ENCODE measurements at regions of chr10 and their contacts with region 1.

Region 1: DNA sequence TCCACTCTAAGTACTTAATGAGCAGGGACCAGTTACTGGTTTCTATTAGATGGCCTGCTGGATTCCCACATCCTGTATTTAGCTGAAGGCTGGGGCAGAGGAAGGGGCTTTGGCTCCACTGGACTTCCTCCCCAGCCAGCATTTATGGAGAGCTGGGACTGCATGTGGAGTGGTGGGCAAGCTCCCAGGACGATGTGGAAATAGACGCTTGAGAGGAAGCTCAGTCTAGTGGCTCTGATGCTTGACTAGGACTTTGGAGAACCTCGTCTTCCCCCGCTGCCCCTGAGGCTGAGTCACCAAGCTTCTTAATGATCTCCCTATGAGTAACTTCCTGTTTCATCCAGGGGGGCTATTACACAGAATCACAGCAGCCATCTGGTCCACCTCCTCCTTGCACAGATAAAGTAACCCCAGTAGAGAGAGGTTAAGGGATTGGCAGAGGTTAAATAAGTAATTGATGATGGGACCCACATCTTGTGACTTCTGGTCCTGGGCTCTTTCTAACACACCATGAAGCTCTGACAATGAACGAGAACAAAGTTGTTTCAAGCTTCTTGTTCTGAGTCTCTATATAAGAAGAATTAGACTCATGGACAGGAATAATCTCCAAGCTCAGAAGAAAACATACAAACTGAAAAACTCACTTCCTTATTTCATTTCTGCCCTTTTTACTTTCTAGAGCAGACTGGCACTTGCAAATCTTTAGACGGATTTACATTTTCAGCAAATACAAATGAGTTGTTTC is 126.2 kb downstream of the PRPF18 start:
- DNase-seq: peak; percentile 96
- H3K4me3 ChIP-seq: no peak overlapping the region
- H3K27ac ChIP-seq: peak overlapping the region; percentile 92
- H3K4me1 ChIP-seq: peaks cover 43% of the 10 kb centered on the region
- H3K27me3 ChIP-seq: no peaks in the 10 kb centered on the region
- CTCF ChIP-seq: no peak
- POLR2A ChIP-seq: peak; percentile 65

Region 2: GRCh38 chr10:13542533-13542932 is 170.5 kb before region 1 on chr10:
- CTCF ChIA-PET with region 1: no interaction called
- POLR2A ChIA-PET with region 1: no interaction called
- dilution Hi-C with region 1: no loop called
- intact Hi-C with region 1: no loop called
- DNase-seq: no peak
- H3K4me3 ChIP-seq: no peak overlapping the region
- H3K27ac ChIP-seq: no peak overlapping the region
- H3K4me1 ChIP-seq: no peaks in the 10 kb centered on the region
- H3K27me3 ChIP-seq: peaks cover 14 to 30% of the 10 kb centered on the region in 2 experiments
- CTCF ChIP-seq: no peak
- POLR2A ChIP-seq: no peak

Region 3: GRCh38 chr10:13758312-13758711 is 45.3 kb after region 1 on chr10:
- CTCF ChIA-PET with region 1: no interaction called
- POLR2A ChIA-PET with region 1: interaction called, 3 read pairs
- dilution Hi-C with region 1: no loop called
- intact Hi-C with region 1: loop called (anchors 2 kb)
- DNase-seq: peak; percentile 77
- H3K4me3 ChIP-seq: no peak overlapping the region
- H3K27ac ChIP-seq: peak overlapping the region; percentile 85
- H3K4me1 ChIP-seq: peaks cover 36% of the 10 kb centered on the region
- H3K27me3 ChIP-seq: no peaks in the 10 kb centered on the region
- CTCF ChIP-seq: no peak
- POLR2A ChIP-seq: no peak

Region 4: DNA sequence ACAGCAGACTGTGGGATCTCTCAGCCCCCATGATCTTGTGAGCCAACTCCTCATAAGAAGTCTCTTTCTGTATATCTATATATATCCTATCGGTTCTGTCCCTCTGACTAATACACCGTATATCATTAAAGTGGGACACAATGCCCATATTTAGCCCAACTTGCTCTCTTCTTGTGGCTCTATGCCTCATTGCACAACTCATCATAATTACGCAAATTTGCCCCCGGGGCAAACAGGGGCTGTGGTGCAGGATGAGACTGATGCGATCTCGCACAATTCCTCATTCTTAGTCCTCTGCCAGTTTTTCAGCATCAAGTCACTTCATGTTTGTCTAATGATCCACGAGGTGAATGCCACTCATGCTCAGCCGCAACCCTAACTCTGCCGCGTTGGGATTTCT is 56.9 kb after region 1 on chr10:
- CTCF ChIA-PET with region 1: no interaction called
- POLR2A ChIA-PET with region 1: no interaction called
- dilution Hi-C with region 1: no loop called
- intact Hi-C with region 1: no loop called
- DNase-seq: no peak
- H3K4me3 ChIP-seq: no peak overlapping the region
- H3K27ac ChIP-seq: no peak overlapping the region
- H3K4me1 ChIP-seq: peaks cover 14% of the 10 kb centered on the region
- H3K27me3 ChIP-seq: no peaks in the 10 kb centered on the region
- CTCF ChIP-seq: no peak
- POLR2A ChIP-seq: no peak

Region 5: DNA sequence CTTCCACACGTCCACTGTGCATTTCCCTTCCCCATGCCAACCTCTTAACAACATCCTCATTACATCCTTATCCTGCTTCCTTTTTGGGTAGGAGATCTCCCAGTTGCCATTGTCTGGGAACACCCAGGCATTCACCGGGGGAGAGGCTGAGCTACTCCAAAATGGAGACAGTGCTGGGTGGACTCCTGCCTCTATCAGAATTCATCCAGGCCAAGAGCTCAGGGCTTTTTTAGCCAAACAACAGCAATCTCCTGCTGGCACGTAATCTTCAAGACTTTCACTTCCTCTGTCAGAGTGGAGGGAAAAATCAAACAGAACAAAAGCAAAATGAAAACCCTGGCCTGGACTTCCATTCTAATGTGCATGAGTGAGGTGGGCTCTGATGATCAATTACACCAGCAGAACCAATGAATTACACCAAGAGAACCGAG is 118.7 kb after region 1 on chr10:
- CTCF ChIA-PET with region 1: no interaction called
- POLR2A ChIA-PET with region 1: no interaction called
- dilution Hi-C with region 1: no loop called
- intact Hi-C with region 1: no loop called
- DNase-seq: peak; percentile 76
- H3K4me3 ChIP-seq: no peak overlapping the region
- H3K27ac ChIP-seq: peak overlapping the region; percentile 75
- H3K4me1 ChIP-seq: peaks cover 42% of the 10 kb centered on the region
- H3K27me3 ChIP-seq: no peaks in the 10 kb centered on the region
- CTCF ChIP-seq: no peak
- POLR2A ChIP-seq: no peak

Measured in endothelial cell of umbilical vein (primary cell).